MCF 10A (cell line): ENCODE measurements at regions of chr15 and their contacts with region 1.

Region 1: GRCh38 chr15:57527382-57528091 is 64.2 kb upstream of the MYZAP start:
- DNase-seq: peak; percentile 81
- H3K4me3 Mint-ChIP-seq: no peak overlapping the region
- H3K27ac Mint-ChIP-seq: no peak overlapping the region
- H3K4me1 Mint-ChIP-seq: no peaks in the 10 kb centered on the region
- H3K27me3 Mint-ChIP-seq: peaks cover 2% of the 10 kb centered on the region
- CTCF ChIP-seq: peak; percentile 63

Region 2: GRCh38 chr15:56491110-56491722 is 1036.3 kb before region 1 on chr15:
- CTCF ChIA-PET with region 1: interaction called, 20 read pairs
- POLR2A ChIA-PET with region 1: no interaction called
- intact Hi-C with region 1: loop called (anchors 2 kb)
- DNase-seq: peak; percentile 72
- H3K4me3 Mint-ChIP-seq: no peak overlapping the region
- H3K27ac Mint-ChIP-seq: no peak overlapping the region
- H3K4me1 Mint-ChIP-seq: no peaks in the 10 kb centered on the region
- H3K27me3 Mint-ChIP-seq: no peaks in the 10 kb centered on the region
- CTCF ChIP-seq: peak; percentile 79

Region 3: GRCh38 chr15:56821721-56822425 is 705.7 kb before region 1 on chr15:
- CTCF ChIA-PET with region 1: interaction called, 4 read pairs
- POLR2A ChIA-PET with region 1: no interaction called
- intact Hi-C with region 1: loop called (anchors 5 kb)
- DNase-seq: peak; percentile 74
- H3K4me3 Mint-ChIP-seq: no peak overlapping the region
- H3K27ac Mint-ChIP-seq: no peak overlapping the region
- H3K4me1 Mint-ChIP-seq: peaks cover 14% of the 10 kb centered on the region
- H3K27me3 Mint-ChIP-seq: no peaks in the 10 kb centered on the region
- CTCF ChIP-seq: peak; percentile 72

Region 4: DNA sequence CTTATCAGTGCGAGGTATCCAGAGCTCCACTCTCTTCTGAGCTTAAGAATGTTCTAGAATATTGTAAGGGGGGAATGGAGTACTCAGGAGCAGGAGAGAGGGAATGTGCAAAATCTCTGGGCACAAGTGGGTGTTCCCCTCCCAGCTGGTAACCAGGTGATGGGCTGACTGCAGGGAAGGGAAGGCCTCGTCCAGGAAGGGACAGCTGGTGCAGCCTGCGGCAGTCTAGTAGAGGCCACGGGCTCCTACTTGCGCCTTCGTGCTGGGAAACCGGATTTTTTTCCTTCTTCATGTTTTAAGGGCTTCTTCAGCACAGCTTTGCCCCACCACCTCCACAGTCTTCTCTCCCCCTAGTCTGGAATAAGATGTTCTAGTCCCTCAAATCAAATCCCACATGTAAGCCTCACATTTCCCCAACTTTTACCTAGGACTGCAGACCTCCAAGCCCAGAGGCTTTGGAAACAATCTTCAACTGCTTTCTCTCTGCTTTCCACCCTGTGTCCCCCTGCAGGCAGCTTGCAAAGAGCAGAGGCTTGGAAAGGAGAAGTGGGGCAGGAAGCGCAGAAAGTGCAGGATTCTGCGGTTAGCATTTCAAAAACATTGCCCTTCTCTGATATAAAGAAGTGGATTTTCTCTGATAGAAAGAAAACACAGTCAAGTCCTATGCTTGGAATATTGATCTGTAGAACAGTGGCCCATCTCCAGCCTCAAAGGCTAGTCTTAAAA is 163.1 kb before region 1 on chr15:
- CTCF ChIA-PET with region 1: interaction called, 15 read pairs
- POLR2A ChIA-PET with region 1: no interaction called
- intact Hi-C with region 1: no loop called
- DNase-seq: no peak
- H3K4me3 Mint-ChIP-seq: no peak overlapping the region
- H3K27ac Mint-ChIP-seq: no peak overlapping the region
- H3K4me1 Mint-ChIP-seq: no peaks in the 10 kb centered on the region
- H3K27me3 Mint-ChIP-seq: no peaks in the 10 kb centered on the region
- CTCF ChIP-seq: no peak

Region 5: DNA sequence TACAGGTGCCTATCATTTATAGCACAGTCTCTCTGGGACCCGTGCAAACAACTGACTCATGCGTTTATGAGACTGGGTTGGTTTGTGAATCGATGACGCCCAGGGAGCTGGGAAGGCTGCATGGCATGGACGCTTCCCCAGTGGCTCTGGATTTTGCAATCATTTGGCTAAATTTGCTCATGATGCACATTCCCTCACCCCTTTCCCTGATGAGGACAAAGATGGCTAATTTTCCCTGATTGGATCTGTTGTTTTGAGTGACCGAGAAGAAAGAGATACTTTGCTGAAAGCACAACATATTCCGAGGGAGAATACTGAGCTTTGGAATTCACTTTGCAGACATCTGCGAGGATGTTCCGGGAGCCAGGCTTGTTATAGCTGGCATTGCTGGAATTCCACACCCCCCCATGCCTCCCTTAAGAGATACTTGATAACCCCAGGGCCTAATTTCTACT is 100.1 kb before region 1 on chr15:
- CTCF ChIA-PET with region 1: no interaction called
- POLR2A ChIA-PET with region 1: no interaction called
- intact Hi-C with region 1: no loop called
- DNase-seq: peak; percentile 40
- H3K4me3 Mint-ChIP-seq: no peak overlapping the region
- H3K27ac Mint-ChIP-seq: no peak overlapping the region
- H3K4me1 Mint-ChIP-seq: no peaks in the 10 kb centered on the region
- H3K27me3 Mint-ChIP-seq: peaks cover 12% of the 10 kb centered on the region
- CTCF ChIP-seq: no peak

Region 6: DNA sequence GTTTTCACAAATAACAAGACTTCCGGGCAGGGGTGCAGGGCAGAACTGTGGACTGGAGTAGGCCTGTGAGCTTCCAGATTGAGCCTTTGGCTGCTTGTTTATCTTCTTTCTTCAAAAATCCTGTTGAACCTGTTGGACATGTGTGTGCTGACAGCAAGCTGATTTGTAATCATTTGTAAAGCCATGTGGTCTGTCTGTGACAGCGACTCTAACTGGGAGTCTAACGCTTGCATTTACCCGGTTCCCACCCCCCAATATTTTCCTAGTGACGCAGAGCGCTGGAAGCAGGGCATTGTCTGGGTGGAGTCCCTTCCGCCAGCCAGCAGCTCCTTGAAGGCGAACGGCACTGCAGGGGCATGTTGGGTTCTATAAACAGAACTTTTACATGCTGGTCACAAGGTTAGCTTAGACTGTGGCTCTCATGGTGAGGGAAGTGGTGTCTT is 21.6 kb before region 1 on chr15:
- CTCF ChIA-PET with region 1: interaction called, 12 read pairs
- POLR2A ChIA-PET with region 1: no interaction called
- intact Hi-C with region 1: no loop called
- DNase-seq: no peak
- H3K4me3 Mint-ChIP-seq: no peak overlapping the region
- H3K27ac Mint-ChIP-seq: peak overlapping the region; percentile 64
- H3K4me1 Mint-ChIP-seq: no peaks in the 10 kb centered on the region
- H3K27me3 Mint-ChIP-seq: no peaks in the 10 kb centered on the region
- CTCF ChIP-seq: no peak

Region 7: DNA sequence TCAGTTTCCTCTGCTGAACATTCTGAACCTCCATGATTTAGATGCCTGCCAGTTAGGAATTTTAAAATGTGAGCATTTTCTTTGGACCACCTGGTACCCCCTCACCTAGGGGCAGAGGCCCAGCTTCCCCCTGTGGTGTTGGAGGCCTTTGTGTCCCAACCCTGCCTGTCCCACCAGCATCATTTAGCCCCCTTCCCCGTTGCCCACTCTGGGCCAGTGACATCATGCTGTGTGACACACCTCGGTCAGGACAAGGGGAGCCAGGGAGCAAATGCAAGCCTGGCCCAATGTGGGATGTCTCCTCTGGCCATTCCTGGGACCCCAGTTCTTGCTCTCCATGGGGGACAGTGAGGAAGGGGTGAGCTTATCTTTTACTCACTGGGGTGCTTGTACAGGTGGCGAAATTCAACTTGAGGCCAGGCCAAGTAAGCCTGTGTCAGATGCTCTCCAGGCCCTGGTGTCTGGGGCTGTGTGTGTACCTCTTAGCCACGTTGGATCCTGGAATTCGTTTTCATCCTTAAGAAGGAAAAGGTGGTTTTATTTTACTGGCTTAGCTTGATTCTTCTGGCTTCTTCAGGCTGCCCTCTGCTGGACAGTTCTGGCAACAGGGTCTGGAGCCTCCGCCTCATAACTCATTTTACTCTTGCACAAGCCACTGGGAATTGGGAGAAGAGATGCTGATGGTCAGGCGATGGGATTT is 14.4 kb after region 1 on chr15:
- CTCF ChIA-PET with region 1: interaction called, 84 read pairs
- POLR2A ChIA-PET with region 1: no interaction called
- intact Hi-C with region 1: no loop called
- DNase-seq: peak; percentile 80
- H3K4me3 Mint-ChIP-seq: no peak overlapping the region
- H3K27ac Mint-ChIP-seq: no peak overlapping the region
- H3K4me1 Mint-ChIP-seq: no peaks in the 10 kb centered on the region
- H3K27me3 Mint-ChIP-seq: peaks cover 17% of the 10 kb centered on the region
- CTCF ChIP-seq: peak; percentile 78